Activated T-helper 2 cell treated with anti-CD3 and anti-CD28 coated beads, Interferon-gamma antibody, Interleukin-2, Interleukin-4, amounts not matched to agents 10 μg/mL and 5 μg/mL and 100 μg/mL, durations not matched to agents 14 hours and 24 hours and 36 hours (primary cell): ENCODE measurements at regions of chr21 and their contacts with region 1.

Region 1: GRCh38 chr21:26236281-26236680 is 65.7 kb upstream of the APP start:
- DNase-seq: no peak
- H3K4me3 Mint-ChIP-seq: no peak overlapping the region
- H3K27ac Mint-ChIP-seq: no peak overlapping the region
- H3K4me1 Mint-ChIP-seq: no peaks in the 10 kb centered on the region
- H3K27me3 Mint-ChIP-seq: no peaks in the 10 kb centered on the region

Region 2: GRCh38 chr21:26224351-26224750 is 11.9 kb before region 1 on chr21:
- intact Hi-C with region 1: loop called (anchors 1 kb)
- DNase-seq: no peak
- H3K4me3 Mint-ChIP-seq: no peak overlapping the region
- H3K27ac Mint-ChIP-seq: no peak overlapping the region
- H3K4me1 Mint-ChIP-seq: no peaks in the 10 kb centered on the region
- H3K27me3 Mint-ChIP-seq: no peaks in the 10 kb centered on the region

Region 3: DNA sequence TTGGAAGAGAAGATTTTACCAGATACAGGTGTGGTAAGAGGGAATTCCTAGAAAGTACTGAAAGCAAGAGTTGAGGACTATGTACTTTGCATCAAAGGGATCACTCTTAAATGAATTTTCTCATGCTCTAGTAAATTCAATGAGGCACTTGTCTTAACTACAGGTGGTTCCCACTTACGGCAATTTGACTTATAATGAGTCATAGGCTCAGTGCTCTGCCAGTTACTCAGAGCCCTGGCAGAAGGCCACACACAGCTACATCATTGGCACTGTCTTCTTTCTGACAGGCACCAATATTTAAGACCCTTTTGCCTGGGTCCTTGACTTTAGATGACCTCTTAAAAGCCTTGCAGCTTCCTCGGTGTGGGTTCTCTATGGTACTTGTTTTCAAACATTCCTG is 746.5 kb after region 1 on chr21:
- intact Hi-C with region 1: no loop called
- DNase-seq: no peak
- H3K4me3 Mint-ChIP-seq: no peak overlapping the region
- H3K27ac Mint-ChIP-seq: no peak overlapping the region
- H3K4me1 Mint-ChIP-seq: no peaks in the 10 kb centered on the region
- H3K27me3 Mint-ChIP-seq: no peaks in the 10 kb centered on the region